ENCODE measurements at regions of chr1 and their contacts with region 1.

Region 1: DNA sequence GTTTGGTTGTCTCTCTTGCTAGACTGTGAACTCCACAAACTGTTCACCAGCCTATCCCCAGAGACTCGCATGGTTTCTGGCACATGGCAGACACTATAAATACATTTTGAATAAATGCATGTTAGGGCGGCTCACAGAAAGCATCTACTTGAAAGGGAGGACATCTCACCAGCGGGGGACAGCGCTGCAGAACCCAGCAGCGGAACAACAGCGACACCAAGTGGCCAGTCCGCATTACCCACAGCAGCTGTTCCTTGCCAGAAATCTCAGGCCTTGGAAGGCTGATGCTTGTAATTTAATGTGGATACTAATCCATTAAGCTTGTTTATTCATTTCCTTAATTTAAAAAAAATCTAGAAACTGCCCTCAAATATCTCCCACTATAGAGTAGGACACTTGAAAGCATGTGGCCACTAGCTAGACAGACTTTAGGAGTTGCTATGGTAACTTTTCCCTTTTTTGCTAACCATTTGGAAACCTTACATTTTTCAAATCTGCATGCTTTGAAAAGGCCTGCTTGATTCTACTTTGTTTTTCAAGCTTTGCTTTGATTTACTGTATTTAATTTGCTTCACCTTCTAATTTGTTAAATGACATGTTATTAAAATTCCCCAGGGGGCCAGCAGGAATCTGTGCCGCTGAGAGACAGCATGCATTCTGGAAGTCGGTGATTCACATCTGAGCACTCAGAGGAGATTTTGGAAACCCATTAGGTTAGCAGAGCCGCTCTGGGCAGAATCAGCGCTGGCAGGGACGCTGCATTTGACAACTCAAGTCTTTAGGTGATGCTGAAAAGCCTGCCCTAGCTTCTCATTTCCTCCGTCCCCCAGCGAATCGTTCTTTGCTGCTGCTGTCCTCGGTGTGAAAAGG is 63.5 kb upstream of the SSX2IP start:
- DNase-seq: peak; percentile 76
- ATAC-seq: peak; percentile 81
- H3K4me3 ChIP-seq: no peak overlapping the region
- H3K4me3 Mint-ChIP-seq: no peak overlapping the region
- H3K27ac ChIP-seq: no peak overlapping the region
- H3K27ac Mint-ChIP-seq: no peak overlapping the region
- H3K4me1 ChIP-seq: peaks cover 1 to 3% of the 10 kb centered on the region in 2 donors
- H3K4me1 Mint-ChIP-seq: peaks cover 3% of the 10 kb centered on the region
- H3K27me3 ChIP-seq: peaks cover 0 to 16% (median 5%) of the 10 kb centered on the region in 4 experiments
- H3K27me3 Mint-ChIP-seq: peaks cover 30% of the 10 kb centered on the region
- CTCF ChIP-seq: peak; percentile 95

Region 2: DNA sequence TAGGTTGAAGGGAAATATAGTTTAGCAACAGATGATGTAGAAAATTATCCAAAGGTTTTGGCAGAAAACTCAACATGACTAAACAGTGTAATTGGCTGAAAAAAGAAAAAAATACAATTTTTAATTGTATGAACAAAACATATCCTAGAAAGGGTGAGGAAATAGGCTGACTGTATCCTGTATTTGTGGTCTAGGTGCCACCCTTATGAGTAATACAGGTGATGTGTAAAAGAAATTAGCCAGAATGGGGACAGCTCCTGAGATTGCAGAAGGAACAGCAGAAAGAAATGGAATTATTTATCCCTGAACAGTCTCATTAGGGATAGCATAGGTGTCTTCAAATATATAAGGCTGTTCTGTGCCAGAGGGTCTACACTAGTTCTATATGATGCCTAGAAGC is 330.8 kb before region 1 on chr1:
- CTCF ChIA-PET with region 1: no interaction called
- POLR2A ChIA-PET with region 1: no interaction called
- intact Hi-C with region 1: no loop called
- DNase-seq: no peak
- ATAC-seq: no peak
- H3K4me3 ChIP-seq: no peak overlapping the region
- H3K4me3 Mint-ChIP-seq: no peak overlapping the region
- H3K27ac ChIP-seq: no peak overlapping the region
- H3K27ac Mint-ChIP-seq: no peak overlapping the region
- H3K4me1 ChIP-seq: no peaks in the 10 kb centered on the region
- H3K4me1 Mint-ChIP-seq: peaks cover 3% of the 10 kb centered on the region
- H3K27me3 ChIP-seq: no peaks in the 10 kb centered on the region
- H3K27me3 Mint-ChIP-seq: peaks cover 3% of the 10 kb centered on the region
- CTCF ChIP-seq: no peak

Region 3: DNA sequence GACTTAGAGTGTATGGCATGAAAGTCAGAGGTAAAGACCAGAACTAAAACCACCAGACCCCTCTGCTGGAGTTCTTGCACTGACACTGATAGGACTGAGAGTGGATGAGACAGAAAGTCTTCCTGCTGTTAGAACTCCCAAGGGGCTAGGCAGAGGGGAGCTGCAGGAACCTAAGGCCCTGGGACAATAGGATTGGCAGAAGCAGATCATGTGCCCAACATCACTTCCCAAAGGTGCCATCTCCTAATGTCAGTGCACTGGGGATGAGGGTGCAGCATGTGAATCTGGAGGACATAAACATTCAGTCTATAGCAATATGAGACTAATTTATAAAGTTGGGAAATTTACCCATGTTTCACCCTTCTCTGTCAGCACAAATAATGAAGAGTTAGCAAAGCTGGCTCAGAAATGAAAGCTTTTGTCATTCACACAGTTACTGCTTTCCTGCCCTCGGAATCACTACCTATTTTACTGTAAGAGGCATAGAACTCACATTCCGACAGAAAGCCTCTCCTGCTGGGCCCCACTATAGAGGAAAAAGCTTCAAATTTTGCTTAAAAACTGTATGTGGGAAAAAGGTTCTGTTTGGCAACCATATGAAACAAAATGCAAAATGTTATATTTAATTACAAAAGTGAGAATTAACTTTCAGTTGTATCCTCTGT is 13.6 kb before region 1 on chr1:
- CTCF ChIA-PET with region 1: interaction called, 10 read pairs
- POLR2A ChIA-PET with region 1: no interaction called
- intact Hi-C with region 1: no loop called
- DNase-seq: no peak
- ATAC-seq: no peak
- H3K4me3 ChIP-seq: no peak overlapping the region
- H3K4me3 Mint-ChIP-seq: no peak overlapping the region
- H3K27ac ChIP-seq: no peak overlapping the region
- H3K27ac Mint-ChIP-seq: no peak overlapping the region
- H3K4me1 ChIP-seq: no peaks in the 10 kb centered on the region
- H3K4me1 Mint-ChIP-seq: no peaks in the 10 kb centered on the region
- H3K27me3 ChIP-seq: no peaks in the 10 kb centered on the region
- H3K27me3 Mint-ChIP-seq: peaks cover 17% of the 10 kb centered on the region
- CTCF ChIP-seq: no peak